Activated T-helper 1 cell treated with anti-CD3 and anti-CD28 coated beads, Interleukin-12 subunit alpha, Interleukin-12 subunit beta, Interleukin-2, Interleukin-4 antibody, amounts not matched to agents 30 ng/mL and 10 ng/mL and 1 ng/mL, durations not matched to agents 14 hours and 24 hours and 36 hours (primary cell): ENCODE measurements at regions of chr7 and their contacts with region 1.

Region 1: DNA sequence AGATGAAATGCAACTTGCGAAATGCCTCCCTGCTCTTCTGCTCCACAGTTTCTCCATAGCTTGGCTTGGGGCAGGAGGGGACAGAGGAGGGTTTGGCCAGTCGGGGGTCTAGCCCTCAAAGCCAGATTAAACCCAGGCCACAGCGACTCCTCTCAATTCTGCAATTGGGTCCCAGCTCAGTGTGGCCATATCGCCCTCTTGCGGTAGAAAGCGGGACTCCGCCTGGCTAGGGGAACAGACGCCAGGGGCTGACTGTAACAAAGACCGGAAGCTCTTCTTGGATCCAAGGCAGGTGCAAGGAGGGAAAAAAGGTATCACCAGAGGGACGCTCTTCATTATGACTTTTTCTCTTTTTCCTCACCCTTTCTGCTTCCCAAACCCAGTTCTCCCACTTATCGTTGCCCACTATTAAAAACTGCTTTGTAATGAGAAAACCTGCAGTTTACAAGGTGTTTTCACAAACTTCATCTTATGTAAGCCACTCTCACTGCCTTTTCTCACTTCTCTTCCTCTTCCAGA is 36.6 kb upstream of the TNPO3 start:
- DNase-seq: peak; percentile 78
- H3K4me3 Mint-ChIP-seq: no peak overlapping the region
- H3K27ac Mint-ChIP-seq: peak overlapping the region; percentile 18
- H3K4me1 Mint-ChIP-seq: peaks cover 31% of the 10 kb centered on the region
- H3K27me3 Mint-ChIP-seq: no peaks in the 10 kb centered on the region

Region 2: DNA sequence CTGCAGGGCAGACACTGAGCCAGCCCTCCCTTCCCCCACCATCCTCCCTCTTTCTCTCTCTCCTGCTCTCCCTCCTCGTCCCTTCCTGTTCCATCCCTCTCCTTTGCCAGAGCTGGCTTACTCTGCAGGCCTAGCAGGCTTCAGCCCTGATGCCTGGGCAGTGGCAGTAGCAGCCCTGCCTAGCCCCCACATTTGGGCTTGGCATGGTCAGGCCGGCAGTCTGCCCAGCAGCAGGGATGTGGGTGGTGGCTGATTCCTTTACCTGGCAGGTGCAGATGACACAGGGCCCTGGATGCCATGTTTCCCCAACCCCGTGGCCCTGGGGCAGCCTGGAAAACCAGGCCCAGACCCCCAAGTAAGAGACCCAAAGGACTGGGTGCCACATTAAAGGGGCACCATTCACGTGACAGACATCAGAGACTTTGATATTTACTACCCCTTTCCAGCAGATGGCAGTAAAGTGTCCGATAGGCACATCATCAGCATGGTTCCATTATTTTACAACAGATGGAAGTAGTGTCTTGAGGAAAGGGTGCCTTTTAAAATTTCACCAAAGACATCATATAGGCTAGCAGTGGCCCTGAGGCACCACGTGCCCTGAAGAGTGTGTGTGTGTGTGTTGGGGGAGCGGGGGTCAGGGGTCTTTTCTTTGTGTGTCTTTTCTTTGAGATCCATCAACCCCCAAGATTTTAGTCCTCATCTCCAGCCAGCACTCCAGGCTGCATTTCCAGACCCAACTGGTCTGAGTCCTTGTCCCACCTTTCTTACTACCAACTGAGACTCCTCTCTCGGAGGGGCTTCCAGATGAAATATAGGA is 187.0 kb before region 1 on chr7:
- intact Hi-C with region 1: loop called (anchors 1 kb)
- DNase-seq: no peak
- H3K4me3 Mint-ChIP-seq: no peak overlapping the region
- H3K27ac Mint-ChIP-seq: no peak overlapping the region
- H3K4me1 Mint-ChIP-seq: no peaks in the 10 kb centered on the region
- H3K27me3 Mint-ChIP-seq: peaks cover 30% of the 10 kb centered on the region

Region 3: GRCh38 chr7:129009437-129009836 is 82.1 kb before region 1 on chr7:
- intact Hi-C with region 1: loop called (anchors 2 kb)
- DNase-seq: no peak
- H3K4me3 Mint-ChIP-seq: no peak overlapping the region
- H3K27ac Mint-ChIP-seq: peak overlapping the region; percentile 77
- H3K4me1 Mint-ChIP-seq: peaks cover 29% of the 10 kb centered on the region
- H3K27me3 Mint-ChIP-seq: no peaks in the 10 kb centered on the region

Region 4: DNA sequence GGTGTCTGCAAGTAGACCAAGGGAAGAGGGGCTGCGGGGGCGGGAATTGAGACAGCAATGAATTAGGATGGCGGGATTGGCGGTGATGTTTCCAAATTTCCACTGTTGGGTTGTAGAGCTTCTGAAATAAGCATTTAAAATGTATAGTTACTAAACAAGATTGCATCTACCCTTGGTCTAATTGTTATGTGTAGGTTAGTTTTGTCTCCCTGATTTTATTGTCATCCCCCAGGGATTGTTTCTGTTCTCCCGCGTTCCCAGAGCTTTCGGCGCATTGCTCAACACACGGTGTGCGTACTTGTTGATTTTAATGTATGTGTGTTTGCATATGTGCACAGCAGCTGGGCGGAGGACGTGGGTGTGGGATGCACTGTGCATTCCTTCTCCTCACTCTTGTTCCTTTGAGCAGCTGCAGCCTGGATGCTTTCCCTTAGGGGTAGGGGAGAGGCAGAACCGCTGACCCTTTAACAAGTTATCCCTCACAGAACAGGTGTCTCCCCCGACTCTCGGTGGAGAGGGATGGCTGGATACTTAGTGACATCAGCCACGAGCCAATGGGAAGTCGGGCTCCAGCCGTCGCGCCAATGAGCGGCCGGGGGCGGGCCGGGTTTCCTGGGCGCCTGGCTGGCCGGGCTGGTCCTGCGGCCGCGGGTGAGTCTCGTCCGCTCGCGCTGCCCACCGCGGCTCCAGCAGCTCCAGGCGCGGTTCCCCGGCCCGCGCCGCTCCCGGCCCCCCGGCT is 52.7 kb after region 1 on chr7 and contains the start of gene TSPAN33:
- intact Hi-C with region 1: loop called (anchors 1 kb)
- DNase-seq: peak; percentile 67
- H3K4me3 Mint-ChIP-seq: peak within 1 kb of the TSS; percentile 89
- H3K27ac Mint-ChIP-seq: peak within 1 kb of the TSS; percentile 27
- H3K4me1 Mint-ChIP-seq: peaks cover 16% of the 10 kb centered on the region
- H3K27me3 Mint-ChIP-seq: peaks cover 25% of the 10 kb centered on the region
- total RNA-seq, gene TSPAN33: 9.5 and 9.8 TPM in 2 replicates

Region 5: DNA sequence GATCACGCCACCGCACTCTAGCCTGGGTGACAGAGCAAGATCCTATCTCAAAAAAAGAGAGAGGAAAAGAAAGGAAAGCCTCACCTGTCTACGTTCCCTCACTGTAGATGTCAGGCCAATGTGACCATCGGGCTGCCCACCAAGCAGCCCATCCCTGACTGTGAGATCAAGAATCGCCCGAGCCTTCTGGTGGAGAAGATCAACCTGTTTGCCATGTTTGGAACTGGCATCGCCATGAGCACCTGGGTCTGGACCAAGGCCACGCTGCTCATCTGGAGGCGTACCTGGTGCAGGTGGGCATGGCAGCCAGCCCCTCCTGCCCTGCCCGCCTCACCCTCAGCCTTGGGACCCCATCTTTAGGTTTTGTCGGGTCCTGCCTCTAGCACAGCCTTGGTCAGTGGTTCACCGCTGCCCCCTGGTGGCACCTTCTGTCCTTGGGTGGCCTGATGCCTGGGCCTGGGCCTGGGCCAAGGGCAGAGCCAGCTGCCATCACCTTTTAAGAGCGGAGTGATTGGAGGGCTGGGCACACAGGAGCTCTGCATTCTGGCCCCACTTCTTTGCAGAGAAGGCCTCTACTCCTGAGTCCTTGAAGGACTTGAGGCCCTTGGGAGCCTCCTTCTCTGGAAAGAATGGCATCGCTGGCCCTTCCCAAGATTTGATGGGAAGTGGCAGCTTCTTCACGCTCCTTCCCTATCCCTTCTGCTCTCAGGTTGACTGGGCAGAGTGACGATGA is 118.9 kb after region 1 on chr7:
- intact Hi-C with region 1: loop called (anchors 1 kb)
- DNase-seq: peak; percentile 44
- H3K4me3 Mint-ChIP-seq: no peak overlapping the region
- H3K27ac Mint-ChIP-seq: no peak overlapping the region
- H3K4me1 Mint-ChIP-seq: no peaks in the 10 kb centered on the region
- H3K27me3 Mint-ChIP-seq: no peaks in the 10 kb centered on the region

Region 6: DNA sequence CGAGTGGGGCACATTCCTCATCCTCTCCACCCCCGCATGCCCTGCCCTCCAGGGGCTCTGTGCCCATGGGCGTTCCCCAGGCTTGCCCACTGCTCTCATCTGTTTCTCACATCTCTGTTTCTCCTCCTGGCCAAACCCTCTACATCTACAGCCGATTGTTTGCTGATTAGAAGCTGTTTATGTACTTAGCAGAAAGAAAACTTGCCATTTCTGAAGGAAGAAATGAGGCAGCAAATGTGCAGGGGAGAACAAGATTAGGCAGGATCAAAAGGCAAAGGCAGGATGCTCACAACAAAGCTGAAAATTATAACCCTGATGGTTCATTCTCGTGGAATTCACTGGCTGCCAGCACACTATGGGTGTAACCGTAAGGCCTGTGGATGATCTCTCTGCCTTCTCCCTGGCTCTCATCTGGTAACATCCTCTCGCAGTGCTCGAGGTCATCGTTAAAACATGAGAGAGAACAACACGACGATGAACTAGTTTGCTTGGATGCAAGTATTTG is 1754.1 kb after region 1 on chr7:
- intact Hi-C with region 1: no loop called
- DNase-seq: no peak
- H3K4me3 Mint-ChIP-seq: no peak overlapping the region
- H3K27ac Mint-ChIP-seq: no peak overlapping the region
- H3K4me1 Mint-ChIP-seq: peaks cover 10% of the 10 kb centered on the region
- H3K27me3 Mint-ChIP-seq: peaks cover 1% of the 10 kb centered on the region